Activated naive CD4-positive, alpha-beta T cell treated with anti-CD3 and anti-CD28 coated beads for 36 hours (primary cell): ENCODE measurements at regions of chr5 and their contacts with region 1.

Region 1: DNA sequence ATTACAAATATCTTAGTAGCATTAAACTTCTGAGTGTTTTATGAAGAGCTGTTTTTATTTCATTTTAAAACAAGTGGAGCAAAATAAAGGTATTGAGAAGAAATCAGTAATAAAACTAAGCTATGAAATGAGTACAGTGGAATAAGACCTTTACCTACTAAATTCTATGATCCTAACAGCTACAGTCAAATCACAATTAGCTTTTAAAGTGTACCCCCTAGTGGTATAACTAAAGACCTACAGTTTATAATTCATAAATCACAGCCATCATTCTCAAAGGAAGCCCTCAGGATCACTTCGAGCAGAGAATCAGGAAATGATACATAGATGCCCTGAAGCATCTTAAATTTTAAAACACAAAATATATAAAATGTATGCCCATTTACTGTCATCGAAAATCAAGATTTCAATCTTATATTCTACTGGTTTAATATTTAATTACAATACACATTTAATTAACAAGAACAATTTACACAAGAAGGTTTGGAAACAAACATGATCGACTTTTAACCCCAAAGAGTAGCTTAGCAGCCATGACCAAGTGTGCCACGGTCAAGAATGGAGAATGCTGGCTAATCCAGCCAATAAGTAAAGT is 12.3 kb downstream of the CCNH start:
- DNase-seq: no peak
- H3K4me3 Mint-ChIP-seq: no peak overlapping the region
- H3K27ac Mint-ChIP-seq: no peak overlapping the region
- H3K4me1 Mint-ChIP-seq: peaks cover 34% of the 10 kb centered on the region
- H3K27me3 Mint-ChIP-seq: no peaks in the 10 kb centered on the region

Region 2: DNA sequence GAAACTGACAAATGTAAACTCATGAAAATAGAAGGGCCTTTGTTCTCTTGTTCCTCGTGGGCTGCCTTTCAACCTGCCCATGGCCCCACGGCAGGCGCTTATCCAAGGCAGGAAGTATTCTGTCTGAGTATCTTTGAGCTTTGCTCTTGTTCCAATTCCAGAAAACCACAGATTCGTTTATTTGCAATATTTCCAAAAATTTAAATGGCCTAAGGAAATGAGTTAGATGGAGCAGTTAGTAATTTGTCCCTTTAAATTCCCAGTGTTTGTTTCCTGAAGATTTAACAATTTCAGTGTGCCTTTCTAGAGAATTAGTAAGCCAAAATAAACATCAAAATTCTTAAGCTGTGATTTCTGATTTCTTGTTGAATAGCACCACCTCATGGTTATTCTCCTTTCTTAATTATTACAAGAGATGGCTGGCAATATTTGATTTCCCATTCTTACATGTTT is 432.1 kb before region 1 on chr5:
- CTCF ChIA-PET with region 1: interaction called, 4 read pairs
- intact Hi-C with region 1: loop called (anchors 1 kb)
- DNase-seq: no peak
- H3K4me3 Mint-ChIP-seq: no peak overlapping the region
- H3K27ac Mint-ChIP-seq: no peak overlapping the region
- H3K4me1 Mint-ChIP-seq: peaks cover 3% of the 10 kb centered on the region
- H3K27me3 Mint-ChIP-seq: peaks cover 6% of the 10 kb centered on the region

Region 3: DNA sequence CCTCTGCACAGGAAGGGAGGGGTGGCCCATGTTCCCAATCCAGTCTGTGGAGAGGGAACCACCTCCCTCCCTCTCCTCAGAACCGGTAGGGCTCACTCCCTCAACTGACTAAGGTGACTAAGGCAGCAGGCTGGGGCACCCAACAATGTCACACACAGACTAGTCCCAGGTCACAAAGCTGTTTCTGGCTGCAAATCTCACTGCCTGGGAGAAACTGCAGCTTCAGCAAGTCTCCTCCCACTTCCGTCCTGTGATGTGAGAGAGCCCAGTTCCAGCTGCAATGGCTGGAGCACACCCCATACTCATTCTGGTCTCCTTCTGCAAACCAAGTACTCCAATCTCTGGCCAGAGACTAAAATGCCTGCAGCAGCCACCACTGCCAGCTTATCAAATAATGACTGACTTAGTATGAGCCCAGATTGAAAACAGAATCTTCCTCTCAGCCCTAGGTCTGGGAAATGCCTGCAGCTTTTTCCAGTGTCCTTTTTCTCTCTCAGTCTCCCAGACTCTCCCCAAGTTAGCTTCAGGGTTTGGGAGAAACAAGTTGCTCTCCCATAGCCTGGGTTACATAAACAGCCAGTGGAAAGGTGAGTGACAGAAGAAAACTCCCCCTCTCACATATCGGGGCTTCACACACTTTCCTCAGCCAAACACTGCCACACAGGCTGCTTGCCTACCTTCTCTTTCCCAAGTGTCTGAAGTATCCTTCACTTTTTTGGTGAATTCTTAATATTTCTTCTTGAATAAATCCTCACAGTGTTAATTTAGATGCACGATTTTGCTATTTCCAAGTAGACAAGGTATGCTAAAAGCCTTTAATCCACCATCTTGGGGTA is 380.1 kb before region 1 on chr5:
- CTCF ChIA-PET with region 1: interaction called, 4 read pairs
- intact Hi-C with region 1: loop called (anchors 10 kb)
- DNase-seq: peak; percentile 40
- H3K4me3 Mint-ChIP-seq: no peak overlapping the region
- H3K27ac Mint-ChIP-seq: no peak overlapping the region
- H3K4me1 Mint-ChIP-seq: peaks cover 16% of the 10 kb centered on the region
- H3K27me3 Mint-ChIP-seq: no peaks in the 10 kb centered on the region

Region 4: GRCh38 chr5:87383216-87383615 is 17.2 kb before region 1 on chr5:
- CTCF ChIA-PET with region 1: interaction called, 19 read pairs
- intact Hi-C with region 1: no loop called
- DNase-seq: no peak
- H3K4me3 Mint-ChIP-seq: no peak overlapping the region
- H3K27ac Mint-ChIP-seq: no peak overlapping the region
- H3K4me1 Mint-ChIP-seq: no peaks in the 10 kb centered on the region
- H3K27me3 Mint-ChIP-seq: no peaks in the 10 kb centered on the region

Region 5: DNA sequence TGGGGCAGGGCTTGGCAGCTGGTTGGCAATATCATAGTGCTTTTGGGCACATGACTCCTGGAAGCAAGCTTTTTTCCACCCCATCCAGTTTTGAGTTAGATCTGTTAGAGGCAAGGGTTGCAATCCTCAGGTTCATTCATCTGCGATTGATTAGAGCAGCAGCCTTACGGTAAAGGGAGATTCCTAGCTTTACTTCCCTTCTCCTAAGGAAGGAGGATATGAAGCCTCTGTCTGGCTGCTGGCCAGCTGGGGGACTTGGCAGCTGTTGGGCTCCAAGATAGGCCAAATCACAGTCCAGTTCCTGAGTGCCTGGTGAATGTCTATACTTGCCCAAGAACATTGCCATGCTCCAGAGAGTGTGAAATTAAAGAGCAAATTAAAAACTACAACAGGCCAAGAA is 125.7 kb after region 1 on chr5:
- CTCF ChIA-PET with region 1: no interaction called
- intact Hi-C with region 1: no loop called
- DNase-seq: no peak
- H3K4me3 Mint-ChIP-seq: no peak overlapping the region
- H3K27ac Mint-ChIP-seq: no peak overlapping the region
- H3K4me1 Mint-ChIP-seq: no peaks in the 10 kb centered on the region
- H3K27me3 Mint-ChIP-seq: no peaks in the 10 kb centered on the region

Region 6: DNA sequence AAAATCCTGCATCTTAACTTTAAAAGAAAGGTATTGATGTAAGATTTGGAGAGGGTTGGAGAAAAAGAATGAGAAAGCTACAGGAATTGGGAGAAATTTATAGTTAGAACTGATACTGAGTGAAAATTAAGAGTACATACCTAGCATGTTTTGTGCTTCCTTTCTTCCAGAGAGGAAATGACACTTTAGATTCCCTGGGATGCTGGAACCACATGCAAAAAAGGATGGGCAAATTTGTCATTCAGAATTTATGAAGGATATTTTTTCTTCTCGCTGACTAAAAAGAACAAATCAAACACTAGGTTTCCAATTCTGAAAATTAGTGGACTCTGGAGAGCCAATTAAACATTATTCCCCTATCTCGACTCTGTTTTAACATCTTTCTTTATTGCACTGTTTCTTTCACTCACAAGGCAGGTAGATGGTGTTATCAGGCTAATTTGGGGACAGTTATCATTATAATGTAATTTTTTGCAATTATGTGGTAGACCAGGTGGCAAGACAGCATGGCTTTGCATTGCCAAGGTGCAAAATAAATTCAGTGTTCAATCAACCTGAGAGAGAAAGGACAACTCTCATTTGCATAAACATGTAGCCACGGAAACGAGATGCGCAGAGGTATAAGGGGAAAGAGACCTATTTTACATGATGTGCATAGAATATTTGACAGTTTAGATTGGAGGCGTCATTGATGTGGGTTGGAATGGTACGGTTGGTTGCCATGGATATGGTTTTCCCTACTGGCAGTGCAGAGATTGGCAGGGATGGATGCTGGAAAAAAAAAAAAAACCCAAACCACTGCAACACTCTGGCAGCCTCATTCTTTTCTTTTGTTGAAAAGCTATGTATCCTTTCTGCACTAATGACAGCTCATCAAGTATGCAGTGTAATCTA is 332.7 kb after region 1 on chr5:
- CTCF ChIA-PET with region 1: no interaction called
- intact Hi-C with region 1: no loop called
- DNase-seq: no peak
- H3K4me3 Mint-ChIP-seq: no peak overlapping the region
- H3K27ac Mint-ChIP-seq: no peak overlapping the region
- H3K4me1 Mint-ChIP-seq: no peaks in the 10 kb centered on the region
- H3K27me3 Mint-ChIP-seq: peaks cover 4% of the 10 kb centered on the region

Region 7: DNA sequence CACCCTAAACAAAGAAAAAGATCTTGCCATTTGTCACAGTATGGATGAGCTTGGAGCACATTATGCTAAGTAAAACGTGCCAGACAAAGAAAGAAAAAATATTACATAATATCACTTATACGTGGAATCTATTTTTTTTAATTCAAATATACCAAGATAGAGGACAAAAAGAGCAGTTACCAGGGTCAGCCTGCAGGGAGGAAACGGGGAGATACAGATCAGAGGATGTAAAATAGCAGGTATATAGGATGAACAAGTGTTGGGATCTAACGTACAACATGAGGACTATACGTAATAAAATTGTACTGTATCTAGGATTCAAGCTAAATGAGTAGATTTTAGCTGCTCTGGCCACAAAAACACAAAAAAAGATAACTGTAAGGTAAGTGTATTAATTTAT is 620.7 kb after region 1 on chr5:
- CTCF ChIA-PET with region 1: no interaction called
- intact Hi-C with region 1: no loop called
- DNase-seq: no peak
- H3K4me3 Mint-ChIP-seq: no peak overlapping the region
- H3K27ac Mint-ChIP-seq: no peak overlapping the region
- H3K4me1 Mint-ChIP-seq: no peaks in the 10 kb centered on the region
- H3K27me3 Mint-ChIP-seq: no peaks in the 10 kb centered on the region